Gastrocnemius medialis (tissue), 4 donors: ENCODE measurements at regions of chr15 and their contacts with region 1.

Region 1: DNA sequence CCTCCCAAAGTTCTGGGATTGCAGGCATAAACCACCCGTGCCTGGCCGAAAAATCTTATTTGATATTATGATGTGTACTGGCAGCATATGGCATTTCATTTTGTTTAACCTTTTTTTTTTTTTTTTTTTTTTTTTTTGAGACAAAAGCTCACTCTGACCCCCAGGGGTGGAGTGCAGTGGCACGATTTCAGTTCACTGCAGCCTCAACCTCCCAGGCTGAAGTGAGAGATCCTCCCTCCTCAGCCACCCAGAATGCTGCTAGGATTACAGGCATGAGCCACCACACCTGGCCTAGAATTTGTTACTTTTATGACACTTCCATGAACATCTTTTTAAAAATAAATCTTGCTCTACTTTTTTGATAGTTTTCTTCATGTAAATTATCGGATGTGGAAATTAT is 12.0 kb downstream of the TERB2 start:
- DNase-seq: no peak
- ATAC-seq: no peak
- H3K4me3 ChIP-seq: no peak overlapping the region
- H3K27ac ChIP-seq: no peak overlapping the region
- H3K4me1 ChIP-seq: no peaks in the 10 kb centered on the region
- H3K27me3 ChIP-seq: no peaks in the 10 kb centered on the region
- CTCF ChIP-seq: no peak
- POLR2A ChIP-seq: no peak

Region 2: DNA sequence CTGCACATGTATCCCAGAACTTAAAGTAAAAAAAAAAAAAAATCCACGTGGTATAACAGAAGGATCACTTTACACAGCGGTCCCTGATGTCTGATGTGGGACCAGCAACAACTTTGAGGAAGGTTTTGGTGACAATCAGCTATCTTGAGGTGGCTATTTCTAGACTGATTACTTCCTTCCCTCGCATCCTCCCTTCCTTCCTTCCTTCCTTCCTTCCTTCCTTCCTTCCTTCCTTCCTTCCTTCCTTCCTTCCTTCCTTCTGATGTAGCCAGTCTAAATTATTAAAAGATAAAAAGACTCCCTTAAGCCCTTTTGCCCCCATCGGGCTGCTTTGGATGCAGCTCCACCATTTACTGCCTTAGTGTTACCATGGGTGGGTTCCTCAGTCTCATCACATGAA is 69.5 kb after region 1 on chr15:
- in situ Hi-C with region 1: no loop called
- intact Hi-C with region 1: loop called (anchors 5 kb)
- DNase-seq: no peak
- ATAC-seq: no peak
- H3K4me3 ChIP-seq: no peak overlapping the region
- H3K27ac ChIP-seq: no peak overlapping the region
- H3K4me1 ChIP-seq: peaks cover 0 to 3% of the 10 kb centered on the region in 2 donors
- H3K27me3 ChIP-seq: no peaks in the 10 kb centered on the region
- CTCF ChIP-seq: no peak
- POLR2A ChIP-seq: no peak